Right lobe of liver (tissue), 6 donors: ENCODE measurements at regions of chr1 and their contacts with region 1.

Region 1: GRCh38 chr1:235908742-235909520 is 42.2 kb upstream of the LYST start:
- DNase-seq: no peak
- ATAC-seq: peak in 1 of 4 donors; percentile 55
- H3K4me3 ChIP-seq: no peak overlapping the region
- H3K27ac ChIP-seq: no peak overlapping the region
- H3K4me1 ChIP-seq: no peaks in the 10 kb centered on the region
- H3K27me3 ChIP-seq: no peaks in the 10 kb centered on the region
- CTCF ChIP-seq: no peak
- POLR2A ChIP-seq: no peak

Region 2: GRCh38 chr1:235960809-235961208 is 51.9 kb after region 1 on chr1:
- intact Hi-C with region 1: loop called in 1 of 2 experiments (anchors 10 kb)
- DNase-seq: no peak
- ATAC-seq: no peak
- H3K4me3 ChIP-seq: no peak overlapping the region
- H3K27ac ChIP-seq: no peak overlapping the region
- H3K4me1 ChIP-seq: no peaks in the 10 kb centered on the region
- H3K27me3 ChIP-seq: no peaks in the 10 kb centered on the region
- CTCF ChIP-seq: no peak
- POLR2A ChIP-seq: no peak

Region 3: GRCh38 chr1:235999259-235999925 is 90.5 kb after region 1 on chr1:
- intact Hi-C with region 1: no loop called
- DNase-seq: no peak
- ATAC-seq: peak in 3 of 4 donors; percentile 34 to 54 (median 37)
- H3K4me3 ChIP-seq: no peak overlapping the region
- H3K27ac ChIP-seq: no peak overlapping the region
- H3K4me1 ChIP-seq: no peaks in the 10 kb centered on the region
- H3K27me3 ChIP-seq: no peaks in the 10 kb centered on the region
- CTCF ChIP-seq: no peak
- POLR2A ChIP-seq: no peak

Region 4: GRCh38 chr1:236009857-236010256 is 100.9 kb after region 1 on chr1:
- intact Hi-C with region 1: no loop called
- DNase-seq: no peak
- ATAC-seq: peak in 1 of 4 donors; percentile 42
- H3K4me3 ChIP-seq: no peak overlapping the region
- H3K27ac ChIP-seq: peak overlapping the region in 1 of 3 donors; percentile 57
- H3K4me1 ChIP-seq: peaks cover 0 to 22% (median 1%) of the 10 kb centered on the region in 4 donors
- H3K27me3 ChIP-seq: no peaks in the 10 kb centered on the region
- CTCF ChIP-seq: no peak
- POLR2A ChIP-seq: no peak